Spleen (tissue), 13 donors: ENCODE measurements at regions of chr14 and their contacts with region 1.

Region 1: GRCh38 chr14:52473557-52473956 is 78.7 kb downstream of the TXNDC16 start:
- DNase-seq: no peak
- H3K4me3 ChIP-seq: no peak overlapping the region
- H3K27ac ChIP-seq: no peak overlapping the region
- H3K4me1 ChIP-seq: no peaks in the 10 kb centered on the region
- H3K27me3 ChIP-seq: no peaks in the 10 kb centered on the region
- CTCF ChIP-seq: peak in 9 of 11 experiments; percentile 9 to 53 (median 43)
- POLR2A ChIP-seq: no peak

Region 2: GRCh38 chr14:51989293-51990234 is 484.0 kb before region 1 on chr14 and contains the start of gene RTRAF:
- intact Hi-C with region 1: loop called (anchors 10 kb)
- DNase-seq: peak; percentile 99
- H3K4me3 ChIP-seq: peak within 1 kb of the TSS; percentile 84 to 93 (median 89)
- H3K27ac ChIP-seq: peak within 1 kb of the TSS; percentile 69 to 94 (median 90)
- H3K4me1 ChIP-seq: peaks cover 18 to 58% (median 45%) of the 10 kb centered on the region in 6 donors
- H3K27me3 ChIP-seq: no peaks in the 10 kb centered on the region
- CTCF ChIP-seq: peak in 3 of 11 experiments; percentile 17 to 40 (median 28)
- POLR2A ChIP-seq: peak; percentile 21 to 77 (median 47)
- total RNA-seq, gene RTRAF: 37.8 to 94.2 (median 87.4) TPM

Region 3: DNA sequence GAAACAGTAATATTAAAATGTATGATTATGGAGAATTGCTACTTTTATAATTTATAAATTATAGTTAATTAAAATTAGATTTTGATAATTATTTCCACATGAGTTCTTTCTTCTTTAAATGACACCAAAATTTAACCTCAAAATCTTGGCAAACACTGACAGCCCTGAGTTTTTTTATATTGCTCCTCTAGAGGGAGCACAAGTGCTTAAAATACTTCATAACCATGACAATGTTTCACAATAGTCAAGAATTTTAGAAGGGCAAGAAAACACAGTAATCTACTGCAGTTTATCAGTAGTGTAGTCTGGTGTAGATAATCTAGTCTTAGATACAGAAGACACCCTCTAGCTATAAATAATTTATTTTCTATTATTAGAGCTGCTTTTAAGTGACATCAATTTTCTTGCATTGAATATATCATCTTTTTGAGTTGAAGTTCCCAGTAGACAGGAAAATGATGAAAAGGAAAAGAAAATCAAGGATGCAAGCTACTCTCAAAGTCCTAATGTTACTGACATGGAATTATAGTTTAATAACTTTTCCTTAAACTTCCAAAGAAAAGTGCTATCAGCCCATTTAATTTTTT is 173.8 kb before region 1 on chr14:
- intact Hi-C with region 1: loop called (anchors 5 kb)
- DNase-seq: no peak
- H3K4me3 ChIP-seq: no peak overlapping the region
- H3K27ac ChIP-seq: no peak overlapping the region
- H3K4me1 ChIP-seq: peaks cover 3 to 37% (median 10%) of the 10 kb centered on the region in 6 donors
- H3K27me3 ChIP-seq: no peaks in the 10 kb centered on the region
- CTCF ChIP-seq: peak; percentile 36 to 76 (median 69)
- POLR2A ChIP-seq: no peak